Endothelial cell of umbilical vein (primary cell): ENCODE measurements at regions of chr3 and their contacts with region 1.

Region 1: GRCh38 chr3:9792405-9793160 is at the starts of genes ARPC4 and TADA3:
- DNase-seq: peak; percentile 95
- H3K4me3 ChIP-seq: peak within 1 kb of the TSS; percentile 68 to 88 (median 88)
- H3K27ac ChIP-seq: peak within 1 kb of the TSS; percentile 93
- H3K4me1 ChIP-seq: peaks cover 13% of the 10 kb centered on the region
- H3K27me3 ChIP-seq: no peaks in the 10 kb centered on the region
- CTCF ChIP-seq: peak in 1 of 2 donors; percentile 12
- POLR2A ChIP-seq: peak; percentile 88
- total RNA-seq, gene ARPC4: 197 TPM in 2 replicates
- total RNA-seq, gene TADA3: 31.0 and 31.3 TPM in 2 replicates

Region 2: DNA sequence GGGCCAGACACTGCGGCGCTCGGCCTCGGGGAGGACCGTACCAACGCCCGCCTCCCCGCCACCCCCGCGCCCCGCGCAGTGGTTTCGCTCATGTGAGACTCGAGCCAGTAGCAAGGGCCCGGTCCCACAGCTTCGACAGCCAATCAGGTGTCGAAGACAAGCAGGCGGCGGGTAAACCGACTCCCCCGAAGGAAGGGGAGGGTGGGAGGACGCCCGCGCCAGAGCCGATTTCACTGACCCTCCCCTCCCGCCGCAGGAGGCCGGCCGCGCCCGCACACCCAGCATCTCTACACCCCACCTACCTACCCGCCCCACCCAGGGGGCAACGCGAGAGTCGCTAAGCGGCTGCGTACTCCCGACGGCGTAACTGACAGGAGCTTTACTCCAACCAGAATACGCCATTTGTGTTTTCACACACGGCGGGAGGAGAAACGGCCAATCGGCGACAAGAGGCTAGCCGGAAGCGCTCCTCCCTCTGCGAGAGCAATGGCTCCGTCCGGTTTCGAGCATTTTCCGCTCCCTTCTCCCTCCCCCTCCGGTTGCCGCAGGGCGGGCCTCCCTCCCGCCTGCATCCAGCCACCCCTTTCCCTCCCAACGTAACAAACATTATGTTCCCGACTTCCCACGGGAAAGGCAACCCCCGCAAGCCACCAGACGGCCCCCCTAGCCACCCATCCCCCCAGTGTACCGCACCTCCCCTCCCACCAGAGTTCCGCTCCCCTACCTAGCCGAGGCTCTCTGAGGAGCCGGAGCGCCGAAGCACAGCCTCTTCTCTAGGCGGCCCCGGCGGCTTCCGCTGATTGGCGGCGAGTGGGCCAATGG is 395.7 kb before region 1 on chr3:
- CTCF ChIA-PET with region 1: no interaction called
- POLR2A ChIA-PET with region 1: no interaction called
- dilution Hi-C with region 1: no loop called
- intact Hi-C with region 1: loop called (anchors 1 kb)
- DNase-seq: peak; percentile 99
- H3K4me3 ChIP-seq: peak overlapping the region; percentile 8 to 93 (median 43)
- H3K27ac ChIP-seq: peak overlapping the region; percentile 93
- H3K4me1 ChIP-seq: peaks cover 56% of the 10 kb centered on the region
- H3K27me3 ChIP-seq: no peaks in the 10 kb centered on the region
- CTCF ChIP-seq: no peak
- POLR2A ChIP-seq: peak; percentile 84

Region 3: DNA sequence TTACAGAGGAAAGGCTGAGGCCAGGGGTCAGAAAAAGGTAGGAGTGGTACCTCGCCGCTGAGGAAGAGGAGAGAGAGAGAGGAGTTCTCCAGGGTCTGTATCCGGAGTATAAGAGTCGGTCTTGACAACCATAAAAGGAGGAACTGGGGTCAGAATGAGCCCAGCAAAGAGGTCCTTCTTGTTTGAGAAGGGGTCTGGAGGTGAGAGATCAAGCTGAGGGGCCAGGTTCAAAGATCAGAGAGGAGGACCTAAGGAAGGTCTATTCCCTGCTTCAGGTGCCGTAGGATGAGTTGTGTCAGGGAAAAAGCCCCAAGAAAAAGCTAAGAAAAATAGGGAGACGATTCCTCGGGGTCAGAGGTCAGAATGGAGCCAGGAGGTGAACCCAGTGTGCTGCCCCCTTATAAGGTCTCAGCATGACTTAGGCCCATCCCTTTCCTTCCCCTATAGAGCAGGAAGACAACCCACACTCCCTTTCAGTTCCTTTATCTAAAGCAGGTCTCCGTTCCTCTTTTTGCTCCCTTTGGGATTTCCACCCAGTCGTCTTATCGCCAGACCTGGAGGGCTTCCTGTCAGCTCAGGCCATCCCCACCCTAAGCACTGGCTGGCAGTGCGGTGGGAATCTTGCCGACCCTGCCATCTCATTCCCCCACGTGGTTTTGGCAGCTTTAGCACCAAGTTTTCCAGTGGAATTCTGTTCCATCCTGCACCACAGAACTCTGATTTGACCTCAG is 142.6 kb before region 1 on chr3:
- CTCF ChIA-PET with region 1: no interaction called
- POLR2A ChIA-PET with region 1: no interaction called
- dilution Hi-C with region 1: no loop called
- intact Hi-C with region 1: loop called (anchors 2 kb)
- DNase-seq: no peak
- H3K4me3 ChIP-seq: peak overlapping the region; percentile 50 to 80 (median 77)
- H3K27ac ChIP-seq: peak overlapping the region; percentile 34
- H3K4me1 ChIP-seq: peaks cover 5% of the 10 kb centered on the region
- H3K27me3 ChIP-seq: no peaks in the 10 kb centered on the region
- CTCF ChIP-seq: no peak
- POLR2A ChIP-seq: no peak

Region 4: DNA sequence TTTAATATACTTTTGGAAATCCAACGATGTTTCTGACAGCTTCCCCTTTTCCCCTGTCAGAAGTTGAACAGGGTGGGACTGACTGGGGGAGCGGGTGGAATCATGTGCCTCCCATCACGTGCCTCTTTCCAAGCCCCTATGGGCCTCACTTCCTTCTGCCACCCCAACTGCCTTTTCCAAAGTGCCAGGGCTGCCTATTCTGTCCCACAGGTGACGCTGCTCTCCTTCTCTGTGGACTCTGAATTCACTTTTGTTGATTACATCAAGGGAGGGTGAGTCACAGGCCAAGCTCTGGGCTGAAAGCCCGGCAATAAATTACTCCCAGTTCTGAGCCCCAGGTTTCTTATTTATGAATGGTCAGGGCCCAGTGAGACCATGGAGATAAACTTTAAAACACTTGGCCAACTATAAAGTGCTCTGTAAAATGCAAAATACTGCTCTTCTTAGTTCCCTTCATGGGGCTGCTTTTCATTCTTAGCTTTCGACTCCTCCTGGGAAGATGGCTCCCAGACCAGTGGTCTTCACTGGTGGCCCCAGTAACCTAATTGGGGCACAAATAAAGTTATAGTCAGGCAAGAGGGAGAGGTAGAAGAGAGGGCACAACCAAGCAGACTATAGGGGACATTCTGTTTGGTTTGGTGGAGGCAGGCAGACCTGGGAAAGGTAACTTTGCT is 76.7 kb before region 1 on chr3:
- CTCF ChIA-PET with region 1: interaction called, 10 read pairs
- POLR2A ChIA-PET with region 1: interaction called, 3 read pairs
- dilution Hi-C with region 1: no loop called
- intact Hi-C with region 1: loop called (anchors 5 kb)
- DNase-seq: peak; percentile 89
- H3K4me3 ChIP-seq: no peak overlapping the region
- H3K27ac ChIP-seq: no peak overlapping the region
- H3K4me1 ChIP-seq: no peaks in the 10 kb centered on the region
- H3K27me3 ChIP-seq: peaks cover 3 to 5% of the 10 kb centered on the region in 2 experiments
- CTCF ChIP-seq: peak; percentile 75 to 77
- POLR2A ChIP-seq: no peak

Region 5: GRCh38 chr3:9749645-9750555 is 42.7 kb before region 1 on chr3 and contains the start of gene OGG1:
- CTCF ChIA-PET with region 1: interaction called, 4 read pairs
- POLR2A ChIA-PET with region 1: interaction called, 3 read pairs
- dilution Hi-C with region 1: no loop called
- intact Hi-C with region 1: loop called (anchors 1 kb)
- DNase-seq: peak; percentile 98
- H3K4me3 ChIP-seq: peak within 1 kb of the TSS; percentile 55 to 80 (median 58)
- H3K27ac ChIP-seq: peak within 1 kb of the TSS; percentile 46
- H3K4me1 ChIP-seq: peaks cover 39% of the 10 kb centered on the region
- H3K27me3 ChIP-seq: no peaks in the 10 kb centered on the region
- CTCF ChIP-seq: no peak
- POLR2A ChIP-seq: peak; percentile 85
- total RNA-seq, gene OGG1: 24.1 and 27.2 TPM in 2 replicates

Region 6: GRCh38 chr3:9809615-9810432 is 17.2 kb after region 1 on chr3 and contains the start of gene TTLL3:
- CTCF ChIA-PET with region 1: interaction called, 3 read pairs
- POLR2A ChIA-PET with region 1: no interaction called
- dilution Hi-C with region 1: no loop called
- intact Hi-C with region 1: loop called (anchors 1 kb)
- DNase-seq: peak; percentile 53
- H3K4me3 ChIP-seq: peak within 1 kb of the TSS; percentile 52 to 64 (median 55)
- H3K27ac ChIP-seq: peak within 1 kb of the TSS; percentile 36
- H3K4me1 ChIP-seq: peaks cover 12% of the 10 kb centered on the region
- H3K27me3 ChIP-seq: no peaks in the 10 kb centered on the region
- CTCF ChIP-seq: peak in 1 of 2 donors; percentile 5
- POLR2A ChIP-seq: peak; percentile 72
- total RNA-seq, gene TTLL3: 41.8 and 43.5 TPM in 2 replicates

Region 7: DNA sequence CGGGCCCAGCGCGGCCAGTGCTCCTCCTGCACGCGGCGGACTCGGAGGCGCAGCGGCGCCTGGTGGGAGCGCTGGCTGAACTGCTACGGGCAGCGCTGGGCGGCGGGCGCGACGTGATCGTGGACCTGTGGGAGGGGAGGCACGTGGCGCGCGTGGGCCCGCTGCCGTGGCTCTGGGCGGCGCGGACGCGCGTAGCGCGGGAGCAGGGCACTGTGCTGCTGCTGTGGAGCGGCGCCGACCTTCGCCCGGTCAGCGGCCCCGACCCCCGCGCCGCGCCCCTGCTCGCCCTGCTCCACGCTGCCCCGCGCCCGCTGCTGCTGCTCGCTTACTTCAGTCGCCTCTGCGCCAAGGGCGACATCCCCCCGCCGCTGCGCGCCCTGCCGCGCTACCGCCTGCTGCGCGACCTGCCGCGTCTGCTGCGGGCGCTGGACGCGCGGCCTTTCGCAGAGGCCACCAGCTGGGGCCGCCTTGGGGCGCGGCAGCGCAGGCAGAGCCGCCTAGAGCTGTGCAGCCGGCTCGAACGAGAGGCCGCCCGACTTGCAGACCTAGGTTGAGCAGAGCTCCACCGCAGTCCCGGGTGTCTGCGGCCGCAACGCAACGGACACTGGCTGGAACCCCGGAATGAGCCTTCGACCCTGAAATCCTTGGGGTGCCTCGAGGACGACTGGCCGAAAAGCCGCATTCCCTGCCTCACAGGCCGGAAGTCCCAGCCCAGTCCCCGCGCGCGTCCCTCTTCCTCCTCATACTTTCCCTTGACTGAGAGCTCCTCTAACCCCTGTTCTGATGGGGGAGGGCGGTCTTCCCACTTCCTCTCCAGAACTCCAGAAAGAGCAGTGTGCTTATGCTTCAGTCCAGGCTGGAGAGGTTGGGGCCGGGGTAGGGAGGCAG is 122.9 kb after region 1 on chr3:
- CTCF ChIA-PET with region 1: no interaction called
- POLR2A ChIA-PET with region 1: no interaction called
- dilution Hi-C with region 1: no loop called
- intact Hi-C with region 1: loop called (anchors 2 kb)
- DNase-seq: peak; percentile 50
- H3K4me3 ChIP-seq: peak overlapping the region in 2 of 3 experiments; percentile 29 to 39
- H3K27ac ChIP-seq: no peak overlapping the region
- H3K4me1 ChIP-seq: peaks cover 13% of the 10 kb centered on the region
- H3K27me3 ChIP-seq: no peaks in the 10 kb centered on the region
- CTCF ChIP-seq: peak; percentile 32 to 57
- POLR2A ChIP-seq: peak; percentile 29